Mammary epithelial cell (primary cell): ENCODE measurements at regions of chr20 and their contacts with region 1.

Region 1: DNA sequence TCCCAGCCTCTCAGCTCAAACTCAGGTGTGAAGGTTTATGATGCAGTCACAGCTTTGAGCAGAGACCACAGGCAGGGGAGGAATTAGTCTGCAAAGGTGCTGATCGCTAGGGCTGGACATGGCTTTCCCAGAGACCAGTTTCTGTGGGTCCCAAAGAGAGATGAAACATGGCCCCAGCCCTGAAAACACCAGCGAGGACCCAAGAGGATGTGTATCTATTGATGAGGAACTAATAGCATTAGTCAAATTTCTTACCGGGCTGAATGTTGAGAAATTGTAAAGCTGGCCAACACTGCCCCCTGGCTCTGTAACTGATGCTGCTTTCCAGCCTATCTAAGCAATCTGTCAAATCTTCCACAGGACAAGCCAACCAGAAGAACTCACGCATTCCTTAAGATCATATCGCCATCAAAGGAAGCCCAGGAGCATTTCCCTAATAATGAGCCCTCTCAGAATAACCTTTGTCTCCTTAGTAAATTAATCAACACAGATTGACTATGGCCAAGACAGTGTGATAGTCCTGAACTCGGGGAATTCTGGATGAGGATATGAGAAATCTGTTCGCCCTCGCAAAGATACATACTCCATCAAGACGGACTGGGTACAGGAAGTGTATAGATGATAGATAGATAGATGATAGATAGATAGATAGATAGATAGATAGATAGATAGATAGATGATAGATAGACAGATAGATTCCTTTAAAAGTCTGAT is 7.8 kb upstream of the ACSS1 start:
- DNase-seq: peak; percentile 44
- H3K4me3 ChIP-seq: no peak overlapping the region
- H3K27ac ChIP-seq: no peak overlapping the region
- H3K4me1 ChIP-seq: no peaks in the 10 kb centered on the region
- H3K27me3 ChIP-seq: peaks cover 16% of the 10 kb centered on the region
- CTCF ChIP-seq: peak; percentile 82 to 84

Region 2: DNA sequence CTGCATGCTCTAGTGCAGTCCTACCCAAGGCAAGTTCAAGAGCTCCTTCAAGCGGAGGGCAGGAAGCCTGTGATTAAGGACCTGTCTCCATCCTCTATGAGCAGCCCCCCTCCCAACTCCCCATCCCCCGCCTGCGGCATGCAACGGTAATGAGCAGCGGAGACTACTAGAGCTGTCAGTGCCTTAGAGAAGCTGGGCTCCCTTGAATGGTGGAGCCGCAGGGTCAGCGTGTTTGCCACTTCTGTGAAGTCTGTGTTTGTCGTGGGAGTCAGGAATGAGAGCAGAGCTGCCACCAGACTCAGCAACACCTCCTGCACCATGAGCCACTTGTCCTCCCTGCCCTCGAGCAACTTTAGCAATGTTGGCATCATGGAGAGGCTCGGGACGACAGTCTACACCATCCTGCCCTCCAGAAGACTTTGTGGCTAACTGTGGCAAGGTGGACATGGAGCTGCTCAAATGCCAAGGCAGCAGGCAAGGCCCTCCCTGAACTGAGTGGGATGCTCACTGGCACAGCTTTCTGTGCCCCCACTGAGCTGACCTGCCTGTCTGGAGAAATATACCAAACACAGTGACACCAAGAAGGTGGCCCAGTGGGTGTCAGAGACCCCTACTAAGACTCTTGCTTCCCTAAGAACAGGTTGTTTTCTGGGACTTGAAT is 620.1 kb before region 1 on chr20:
- CTCF ChIA-PET with region 1: no interaction called
- dilution Hi-C with region 1: no loop called
- in situ Hi-C with region 1: no loop called
- intact Hi-C with region 1: no loop called
- DNase-seq: no peak
- H3K4me3 ChIP-seq: no peak overlapping the region
- H3K27ac ChIP-seq: no peak overlapping the region
- H3K4me1 ChIP-seq: no peaks in the 10 kb centered on the region
- H3K27me3 ChIP-seq: no peaks in the 10 kb centered on the region
- CTCF ChIP-seq: no peak

Region 3: GRCh38 chr20:24934101-24934661 is 131.6 kb before region 1 on chr20:
- CTCF ChIA-PET with region 1: no interaction called
- dilution Hi-C with region 1: no loop called
- in situ Hi-C with region 1: no loop called
- intact Hi-C with region 1: loop called (anchors 1 kb)
- DNase-seq: no peak
- H3K4me3 ChIP-seq: no peak overlapping the region
- H3K27ac ChIP-seq: no peak overlapping the region
- H3K4me1 ChIP-seq: peaks cover 26% of the 10 kb centered on the region
- H3K27me3 ChIP-seq: no peaks in the 10 kb centered on the region
- CTCF ChIP-seq: no peak

Region 4: DNA sequence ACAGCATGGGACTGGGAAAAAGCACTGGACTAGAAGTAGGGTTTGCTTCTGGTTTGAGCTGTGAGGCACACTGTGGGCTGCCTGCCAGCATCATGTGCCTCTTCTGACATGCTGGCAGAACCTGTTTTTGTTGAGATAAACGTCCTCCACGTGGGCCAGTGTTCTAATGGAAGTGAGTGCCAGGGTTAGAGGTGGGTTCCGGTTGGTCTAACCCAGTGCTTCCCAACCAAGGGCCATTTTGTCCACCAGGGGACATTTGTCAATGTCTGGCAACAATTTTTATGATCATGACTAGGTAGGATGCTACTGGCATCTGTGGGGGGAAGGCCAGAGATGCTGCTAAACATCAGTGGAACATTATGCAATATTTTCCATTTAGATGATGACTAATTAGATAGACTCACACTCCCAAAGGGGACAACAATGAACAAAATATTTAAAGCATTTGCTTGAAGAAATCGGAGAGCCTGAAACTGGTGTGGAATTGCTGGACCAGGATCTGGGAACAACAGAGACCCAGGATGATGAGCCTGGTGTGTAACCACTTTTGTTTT is 65.4 kb before region 1 on chr20:
- CTCF ChIA-PET with region 1: no interaction called
- dilution Hi-C with region 1: loop called (anchors 5 kb)
- in situ Hi-C with region 1: loop called (anchors 5 kb)
- intact Hi-C with region 1: loop called (anchors 1 kb)
- DNase-seq: peak; percentile 89
- H3K4me3 ChIP-seq: no peak overlapping the region
- H3K27ac ChIP-seq: no peak overlapping the region
- H3K4me1 ChIP-seq: peaks cover 13% of the 10 kb centered on the region
- H3K27me3 ChIP-seq: no peaks in the 10 kb centered on the region
- CTCF ChIP-seq: peak; percentile 6 to 28

Region 5: GRCh38 chr20:25116739-25117458 is 51.1 kb after region 1 on chr20:
- CTCF ChIA-PET with region 1: no interaction called
- dilution Hi-C with region 1: no loop called
- in situ Hi-C with region 1: no loop called
- intact Hi-C with region 1: no loop called
- DNase-seq: no peak
- H3K4me3 ChIP-seq: no peak overlapping the region
- H3K27ac ChIP-seq: no peak overlapping the region
- H3K4me1 ChIP-seq: no peaks in the 10 kb centered on the region
- H3K27me3 ChIP-seq: no peaks in the 10 kb centered on the region
- CTCF ChIP-seq: no peak

Region 6: DNA sequence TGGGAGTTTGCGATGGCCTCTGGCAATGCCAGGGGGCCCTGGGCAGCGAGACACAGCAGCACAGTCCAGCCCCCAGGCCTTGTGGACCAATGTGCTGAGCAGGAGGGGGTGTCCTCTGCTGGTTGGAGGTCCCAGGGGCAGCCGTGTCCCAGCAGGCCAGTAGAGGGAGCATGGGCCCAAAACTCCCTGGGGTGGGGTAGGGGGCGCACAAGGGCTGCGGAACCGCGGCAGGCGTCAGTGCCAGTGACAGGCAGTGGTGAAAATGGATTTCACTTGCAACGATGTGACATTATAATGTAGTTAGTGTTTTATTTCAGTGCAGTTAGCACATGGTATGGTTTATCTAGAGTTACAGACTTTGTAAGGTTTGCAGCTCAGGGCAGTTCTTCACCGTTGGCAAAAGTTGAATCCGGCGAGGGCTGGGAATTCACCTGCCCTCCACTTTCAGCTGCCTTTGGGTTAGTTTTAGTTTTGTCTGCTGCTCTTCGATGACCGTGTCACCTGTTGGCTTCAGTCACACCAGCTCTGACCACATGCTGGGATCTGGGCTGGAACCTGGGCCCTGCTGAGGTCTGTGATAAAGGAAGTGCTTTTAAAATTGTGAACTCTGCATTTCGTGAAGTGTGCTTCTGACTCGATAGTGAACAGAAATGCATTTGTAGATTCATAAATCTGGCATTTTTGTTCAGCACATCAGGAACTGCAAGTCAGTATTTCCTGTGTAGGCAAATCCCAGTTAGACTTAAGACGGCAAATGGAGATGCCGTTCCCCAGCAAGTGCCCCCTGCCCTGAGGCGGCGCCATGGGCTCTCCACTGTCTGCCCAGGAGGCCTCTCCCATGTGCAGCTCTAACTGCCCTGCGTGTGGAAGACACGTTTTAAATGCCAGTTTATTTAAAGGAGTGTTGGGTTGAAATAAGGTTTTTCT is 228.9 kb after region 1 on chr20:
- CTCF ChIA-PET with region 1: no interaction called
- dilution Hi-C with region 1: no loop called
- in situ Hi-C with region 1: no loop called
- intact Hi-C with region 1: loop called (anchors 10 kb)
- DNase-seq: no peak
- H3K4me3 ChIP-seq: no peak overlapping the region
- H3K27ac ChIP-seq: no peak overlapping the region
- H3K4me1 ChIP-seq: peaks cover 62% of the 10 kb centered on the region
- H3K27me3 ChIP-seq: no peaks in the 10 kb centered on the region
- CTCF ChIP-seq: peak; percentile 54 to 64

Region 7: DNA sequence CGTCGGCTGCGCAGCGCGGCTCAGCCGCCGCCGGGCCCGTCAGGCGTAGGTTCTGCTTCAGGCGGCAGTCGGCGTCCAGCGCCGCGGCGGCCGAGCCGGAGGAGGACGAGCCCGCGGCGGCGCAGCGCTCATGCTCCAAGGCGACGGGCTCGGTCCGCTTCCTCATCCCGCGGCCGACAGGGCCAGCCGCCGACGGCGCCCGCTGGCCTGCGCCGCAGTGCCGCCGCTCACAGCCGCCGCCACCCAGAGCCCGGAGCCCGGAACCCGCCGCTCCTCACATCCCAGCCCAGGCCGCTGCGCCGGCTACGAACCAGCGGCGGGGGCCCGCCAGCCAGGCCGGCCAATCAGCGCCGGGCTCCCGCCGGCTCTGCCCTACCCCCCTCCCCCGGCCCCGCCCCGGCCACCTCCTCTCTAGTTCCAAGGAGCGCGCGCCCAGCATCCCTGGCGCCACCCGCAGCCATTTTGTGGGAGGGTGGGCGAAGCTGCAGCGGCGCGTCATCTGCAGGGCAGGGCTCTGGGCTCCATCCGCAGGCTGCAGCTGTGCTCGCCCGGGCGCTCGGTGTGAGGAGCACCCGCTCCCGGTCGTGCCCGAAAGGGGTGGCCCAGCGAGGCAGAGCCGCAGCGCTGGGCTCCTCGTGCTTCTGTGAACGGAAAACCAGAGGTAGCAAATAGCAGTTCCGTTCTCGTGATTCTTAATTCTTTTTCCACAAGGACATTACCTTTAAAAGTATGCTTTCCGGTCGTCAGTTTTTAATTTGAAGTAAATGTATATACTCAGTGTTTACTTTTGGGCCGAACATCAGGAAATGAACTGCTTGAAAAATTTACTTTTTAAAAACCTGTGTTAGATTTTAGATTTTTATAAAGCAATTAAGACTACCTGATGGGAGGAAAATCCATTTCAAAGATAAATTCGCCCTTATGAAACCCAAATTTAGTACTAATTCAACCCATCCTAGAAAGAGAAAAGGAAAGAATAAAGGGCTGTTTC is 325.1 kb after region 1 on chr20 and contains the start of gene ABHD12:
- CTCF ChIA-PET with region 1: no interaction called
- dilution Hi-C with region 1: no loop called
- in situ Hi-C with region 1: loop called in 1 of 2 experiments (anchors 25 kb)
- intact Hi-C with region 1: no loop called
- DNase-seq: peak; percentile 97
- H3K4me3 ChIP-seq: peak within 1 kb of the TSS; percentile 63 to 97 (median 68)
- H3K27ac ChIP-seq: peak within 1 kb of the TSS; percentile 44
- H3K4me1 ChIP-seq: peaks cover 7% of the 10 kb centered on the region
- H3K27me3 ChIP-seq: no peaks in the 10 kb centered on the region
- CTCF ChIP-seq: no peak
- total RNA-seq, gene ABHD12: 21.2 to 21.6 TPM

Region 8: GRCh38 chr20:25399037-25399430 is 333.3 kb after region 1 on chr20:
- CTCF ChIA-PET with region 1: interaction called, 3 read pairs
- dilution Hi-C with region 1: no loop called
- in situ Hi-C with region 1: loop called (anchors 25 kb)
- intact Hi-C with region 1: loop called (anchors 2 kb)
- DNase-seq: peak; percentile 65
- H3K4me3 ChIP-seq: no peak overlapping the region
- H3K27ac ChIP-seq: no peak overlapping the region
- H3K4me1 ChIP-seq: no peaks in the 10 kb centered on the region
- H3K27me3 ChIP-seq: no peaks in the 10 kb centered on the region
- CTCF ChIP-seq: peak; percentile 54 to 60

Region 9: GRCh38 chr20:25407311-25408169 is 341.8 kb after region 1 on chr20 and contains the start of gene GINS1:
- CTCF ChIA-PET with region 1: no interaction called
- dilution Hi-C with region 1: no loop called
- in situ Hi-C with region 1: loop called in 1 of 2 experiments (anchors 25 kb)
- intact Hi-C with region 1: no loop called
- DNase-seq: peak; percentile 89
- H3K4me3 ChIP-seq: peak within 1 kb of the TSS; percentile 77 to 82 (median 78)
- H3K27ac ChIP-seq: peak within 1 kb of the TSS; percentile 73
- H3K4me1 ChIP-seq: peaks cover 11% of the 10 kb centered on the region
- H3K27me3 ChIP-seq: no peaks in the 10 kb centered on the region
- CTCF ChIP-seq: no peak
- total RNA-seq, gene GINS1: 5.7 to 16.8 TPM